Mammary epithelial cell (primary cell): ENCODE measurements at regions of chr12 and their contacts with region 1.

Region 1: GRCh38 chr12:26845057-26845666 is 12.2 kb upstream of the ITPR2 start:
- DNase-seq: peak; percentile 13
- H3K4me3 ChIP-seq: no peak overlapping the region
- H3K27ac ChIP-seq: no peak overlapping the region
- H3K4me1 ChIP-seq: no peaks in the 10 kb centered on the region
- H3K27me3 ChIP-seq: no peaks in the 10 kb centered on the region
- CTCF ChIP-seq: peak; percentile 55 to 73

Region 2: DNA sequence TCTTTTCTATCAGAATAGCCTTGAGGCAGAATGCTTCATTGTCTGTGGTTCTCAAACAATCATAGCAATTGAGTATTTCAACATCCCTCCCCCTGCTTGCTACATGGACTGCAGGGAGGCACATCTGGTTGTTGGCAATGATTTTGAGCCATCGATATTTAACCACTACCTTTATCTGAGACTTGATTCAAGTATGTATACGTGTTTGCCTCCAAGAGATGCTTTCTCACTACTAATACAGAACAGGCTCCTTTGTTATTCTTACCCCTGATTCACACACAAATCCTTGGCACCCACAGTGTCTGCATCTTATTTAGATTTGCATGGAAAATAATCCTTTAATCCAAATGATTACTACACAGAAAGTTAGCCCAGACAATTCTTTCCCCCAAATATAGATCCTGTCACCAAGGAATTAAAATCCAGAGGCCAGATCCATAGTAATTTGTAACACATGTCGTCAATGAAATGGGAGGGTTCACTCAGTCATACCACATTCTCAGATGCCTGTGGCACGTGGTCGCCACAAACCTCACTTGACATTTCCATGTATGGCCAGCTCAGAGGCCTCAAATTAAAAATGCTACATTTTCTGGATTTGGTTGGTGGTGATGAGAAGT is 211.5 kb before region 1 on chr12:
- CTCF ChIA-PET with region 1: no interaction called
- dilution Hi-C with region 1: no loop called
- in situ Hi-C with region 1: no loop called
- intact Hi-C with region 1: no loop called
- DNase-seq: peak; percentile 68
- H3K4me3 ChIP-seq: no peak overlapping the region
- H3K27ac ChIP-seq: no peak overlapping the region
- H3K4me1 ChIP-seq: peaks cover 22% of the 10 kb centered on the region
- H3K27me3 ChIP-seq: no peaks in the 10 kb centered on the region
- CTCF ChIP-seq: no peak

Region 3: GRCh38 chr12:26701604-26702215 is 143.5 kb before region 1 on chr12:
- CTCF ChIA-PET with region 1: no interaction called
- dilution Hi-C with region 1: no loop called
- in situ Hi-C with region 1: no loop called
- intact Hi-C with region 1: loop called (anchors 2 kb)
- DNase-seq: peak; percentile 31
- H3K4me3 ChIP-seq: no peak overlapping the region
- H3K27ac ChIP-seq: no peak overlapping the region
- H3K4me1 ChIP-seq: no peaks in the 10 kb centered on the region
- H3K27me3 ChIP-seq: no peaks in the 10 kb centered on the region
- CTCF ChIP-seq: peak; percentile 43 to 57

Region 4: DNA sequence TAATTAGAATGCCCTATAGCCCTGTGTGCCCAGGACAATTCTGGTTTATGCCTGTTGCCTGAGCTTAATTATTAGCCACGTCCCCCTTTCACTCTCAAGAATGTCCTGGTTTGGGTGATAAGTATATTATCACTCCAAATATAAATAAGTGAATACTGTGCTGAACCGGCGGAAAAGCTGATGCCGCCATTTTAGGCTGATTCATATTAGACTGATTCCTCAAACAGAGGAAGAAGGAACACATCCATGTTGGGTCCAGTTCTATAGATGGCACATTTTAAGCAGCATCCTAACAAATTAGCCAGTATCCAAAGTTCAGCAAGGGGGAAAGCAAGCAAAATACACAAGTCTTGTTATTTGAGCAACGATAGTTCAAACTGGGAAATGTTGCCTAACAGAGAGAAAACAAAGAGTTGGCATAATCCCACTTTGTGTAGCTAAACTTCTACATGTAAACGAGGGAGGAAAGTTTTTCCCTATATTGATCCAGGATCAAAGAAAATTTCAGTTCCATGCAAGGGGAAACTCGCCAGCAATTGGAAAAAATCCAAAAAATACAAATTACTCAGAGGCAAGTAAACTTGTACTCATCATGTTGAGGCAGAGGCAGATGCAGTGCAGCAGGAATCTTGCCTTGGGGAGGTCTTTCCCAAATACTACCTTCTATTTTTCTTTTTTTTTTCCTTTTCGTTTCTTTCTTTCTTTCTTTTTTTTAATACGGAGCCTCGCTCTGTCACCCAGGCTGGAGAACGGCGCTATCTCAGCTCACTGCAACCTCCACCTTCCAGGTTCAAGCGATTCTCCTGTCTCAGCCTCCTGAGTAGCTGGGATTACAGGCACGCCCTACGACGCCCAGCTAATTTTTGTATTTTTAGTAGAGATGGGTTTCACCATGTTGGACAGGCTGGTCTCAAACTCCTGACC is 108.3 kb before region 1 on chr12:
- CTCF ChIA-PET with region 1: no interaction called
- dilution Hi-C with region 1: no loop called
- in situ Hi-C with region 1: no loop called
- intact Hi-C with region 1: no loop called
- DNase-seq: peak; percentile 65
- H3K4me3 ChIP-seq: peak overlapping the region in 1 of 3 experiments; percentile 13
- H3K27ac ChIP-seq: no peak overlapping the region
- H3K4me1 ChIP-seq: peaks cover 24% of the 10 kb centered on the region
- H3K27me3 ChIP-seq: no peaks in the 10 kb centered on the region
- CTCF ChIP-seq: no peak

Region 5: DNA sequence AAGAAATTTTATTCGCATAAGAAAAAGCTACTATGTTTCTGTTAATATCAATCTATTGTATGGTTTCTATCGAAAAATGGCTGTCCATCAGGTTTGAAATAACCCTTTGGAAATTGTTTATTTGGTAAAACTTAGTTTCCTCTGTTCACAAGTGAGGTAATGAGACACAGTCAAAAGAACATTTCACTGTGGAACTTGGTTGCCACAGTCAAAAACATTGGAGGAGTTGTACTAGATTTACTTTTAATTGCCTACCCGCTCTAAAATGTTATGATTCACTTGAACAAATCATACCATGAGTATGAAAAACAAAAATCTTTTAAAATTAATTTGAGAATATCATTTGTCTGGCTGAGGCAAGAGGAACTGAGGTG is 58.7 kb before region 1 on chr12:
- CTCF ChIA-PET with region 1: no interaction called
- dilution Hi-C with region 1: no loop called
- in situ Hi-C with region 1: no loop called
- intact Hi-C with region 1: loop called (anchors 2 kb)
- DNase-seq: no peak
- H3K4me3 ChIP-seq: no peak overlapping the region
- H3K27ac ChIP-seq: no peak overlapping the region
- H3K4me1 ChIP-seq: peaks cover 10% of the 10 kb centered on the region
- H3K27me3 ChIP-seq: no peaks in the 10 kb centered on the region
- CTCF ChIP-seq: no peak

Region 6: DNA sequence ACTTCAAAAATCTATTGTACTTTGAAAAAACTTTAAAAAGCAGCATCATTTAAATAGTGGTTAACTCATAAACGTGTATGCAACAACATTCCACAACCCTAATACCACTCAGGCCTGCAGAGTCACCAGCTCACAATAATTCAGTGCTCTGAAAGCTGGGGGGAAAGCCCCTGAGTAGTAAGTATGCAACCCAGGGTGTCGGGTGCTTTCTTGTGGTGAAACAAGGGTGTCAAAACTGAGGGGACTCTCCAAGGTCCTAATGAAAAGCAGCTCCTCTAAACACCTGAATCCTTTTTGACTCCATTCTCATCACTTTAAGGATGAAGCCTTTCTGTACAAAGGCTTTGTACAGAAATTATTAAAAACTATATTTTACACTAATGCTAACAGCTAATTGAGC is 126.8 kb after region 1 on chr12:
- CTCF ChIA-PET with region 1: no interaction called
- dilution Hi-C with region 1: no loop called
- in situ Hi-C with region 1: no loop called
- intact Hi-C with region 1: no loop called
- DNase-seq: no peak
- H3K4me3 ChIP-seq: no peak overlapping the region
- H3K27ac ChIP-seq: no peak overlapping the region
- H3K4me1 ChIP-seq: peaks cover 1% of the 10 kb centered on the region
- H3K27me3 ChIP-seq: no peaks in the 10 kb centered on the region
- CTCF ChIP-seq: no peak